Activated CD8-positive, alpha-beta memory T cell treated with anti-CD3 and anti-CD28 coated beads, Interleukin-2, amount 10 ng/mL, durations not matched to agents 7 days and 5 days (primary cell): ENCODE measurements at regions of chr12 and their contacts with region 1.

Region 1: DNA sequence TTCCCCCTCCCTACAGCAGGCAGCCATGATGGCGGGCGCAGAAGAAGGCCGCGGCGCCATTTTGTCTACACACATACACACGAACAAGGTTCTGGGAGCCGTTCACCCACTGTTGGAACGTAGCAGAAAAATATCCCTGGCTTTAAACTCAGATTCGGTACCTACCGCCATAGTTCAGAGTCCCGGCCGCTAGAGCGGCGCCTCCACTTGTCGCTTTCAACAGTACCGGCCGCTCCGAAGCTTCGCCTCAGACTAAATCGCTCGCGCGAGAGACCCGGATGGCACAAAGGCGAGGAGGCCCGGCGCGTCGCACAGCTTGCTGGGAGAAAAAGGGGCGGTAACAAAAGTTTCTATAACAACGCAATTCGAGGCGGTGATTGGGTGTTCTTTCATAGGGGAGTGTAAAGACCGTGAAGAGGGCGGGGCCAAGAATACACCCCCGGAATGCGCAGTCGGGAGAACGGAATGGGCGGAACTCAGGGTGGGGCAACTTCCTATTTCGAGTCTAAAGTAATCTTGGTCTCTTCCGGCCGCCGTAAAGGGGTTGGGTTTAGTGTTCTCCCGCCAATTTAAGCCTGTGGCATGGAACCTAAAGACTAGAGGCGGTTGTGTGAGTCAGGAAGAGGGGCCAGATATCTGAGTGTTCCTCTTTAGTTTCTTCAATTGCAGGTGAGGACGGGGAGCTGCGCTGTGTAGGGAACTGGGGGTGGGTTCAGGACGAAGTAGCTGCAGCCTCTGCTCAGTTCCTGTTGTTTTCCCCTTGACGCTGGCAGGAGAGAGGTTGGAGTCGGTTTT is at the starts of genes KNTC1 and RSRC2:
- DNase-seq: peak; percentile 100
- ATAC-seq: peak; percentile 89
- H3K4me3 Mint-ChIP-seq: no peak within 1 kb of the TSS
- H3K27ac Mint-ChIP-seq: no peak within 1 kb of the TSS
- H3K4me1 Mint-ChIP-seq: peaks cover 43% of the 10 kb centered on the region
- H3K27me3 Mint-ChIP-seq: no peaks in the 10 kb centered on the region
- total RNA-seq, gene KNTC1: 129 to 200 TPM
- total RNA-seq, gene RSRC2: 102 to 113 TPM

Region 2: GRCh38 chr12:122500685-122501488 is 26.0 kb before region 1 on chr12 and contains the start of gene ZCCHC8:
- CTCF ChIA-PET with region 1: interaction called, 11 read pairs
- DNase-seq: peak; percentile 99
- ATAC-seq: peak; percentile 94
- H3K4me3 Mint-ChIP-seq: peak within 1 kb of the TSS; percentile 97
- H3K27ac Mint-ChIP-seq: peak within 1 kb of the TSS; percentile 99
- H3K4me1 Mint-ChIP-seq: peaks cover 36% of the 10 kb centered on the region
- H3K27me3 Mint-ChIP-seq: no peaks in the 10 kb centered on the region
- total RNA-seq, gene ZCCHC8: 45.2 to 45.3 TPM